ENCODE measurements at regions of chr18 and their contacts with region 1.

Region 1: GRCh38 chr18:52339891-52340371 is at the start of gene DCC:
- DNase-seq: peak; percentile 53 to 95 (median 74)

Region 2: DNA sequence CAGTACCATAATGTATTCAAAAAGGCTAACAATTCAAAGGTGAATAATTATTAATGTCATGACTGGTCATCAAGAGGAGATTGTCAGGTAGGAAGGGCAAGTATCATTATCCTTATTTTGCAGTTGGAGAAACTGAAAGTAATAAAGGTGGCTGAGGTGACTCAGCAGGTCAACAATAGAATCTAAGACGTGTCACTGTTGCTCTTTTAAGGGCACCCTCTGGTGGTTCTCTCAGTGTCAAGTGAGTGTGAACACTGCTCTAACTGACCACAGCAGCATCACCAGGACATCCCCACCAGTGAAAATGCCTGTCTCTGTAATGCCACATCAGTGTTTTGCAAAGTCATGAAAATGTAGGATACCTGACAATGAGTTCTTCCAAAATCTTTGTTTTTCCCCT is 69.8 kb after region 1 on chr18:
- intact Hi-C with region 1: loop called (anchors 5 kb)
- DNase-seq: peak in 1 of 10 donors; percentile 35

Region 3: GRCh38 chr18:52670896-52671295 is 331.0 kb after region 1 on chr18:
- intact Hi-C with region 1: loop called (anchors 5 kb)
- DNase-seq: no peak